ENCODE measurements at regions of chr14 and their contacts with region 1.

Region 1: DNA sequence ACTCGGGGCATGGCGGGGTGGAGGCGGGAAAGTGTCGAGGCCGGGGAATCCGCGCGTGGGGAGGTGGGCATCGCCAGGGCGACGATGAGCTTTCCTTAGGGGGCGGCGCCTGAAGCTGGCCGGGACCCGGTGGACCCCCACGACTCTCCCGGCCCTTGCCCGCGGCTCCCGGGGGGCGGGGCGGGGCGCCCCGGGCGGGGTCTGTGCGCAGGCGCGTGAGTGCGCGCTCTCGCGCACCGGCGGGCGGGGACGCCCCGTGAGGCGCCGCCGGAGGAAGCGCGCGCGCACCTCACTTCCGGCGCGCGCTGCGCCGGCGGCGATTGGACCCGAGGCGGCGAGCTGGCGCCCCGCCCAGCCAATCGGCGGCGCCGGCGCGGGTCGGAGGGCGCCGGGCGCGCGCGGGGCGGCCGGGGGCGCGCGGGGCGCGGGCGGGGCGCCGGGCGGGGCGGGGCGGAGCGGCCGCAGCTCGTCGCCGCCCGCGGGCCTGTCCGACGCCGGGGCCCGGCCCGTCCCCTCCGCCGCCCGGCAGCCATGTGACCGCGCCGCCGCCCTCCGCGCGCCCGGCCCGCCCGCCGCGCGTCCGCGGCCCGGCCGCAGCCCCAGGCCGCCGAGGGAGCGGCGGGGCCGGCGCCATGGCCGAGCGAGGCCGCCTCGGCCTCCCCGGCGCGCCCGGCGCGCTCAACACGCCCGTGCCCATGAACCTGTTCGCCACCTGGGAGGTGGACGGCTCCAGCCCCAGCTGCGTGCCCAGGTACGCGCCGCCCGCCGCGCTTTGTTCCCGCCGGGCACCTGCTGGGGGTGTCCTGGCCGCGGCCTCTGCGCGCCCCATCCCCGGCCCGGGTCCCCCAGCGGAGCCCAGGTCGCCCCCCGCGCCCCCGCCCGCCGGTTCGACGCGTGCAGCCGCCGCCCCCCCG is at the start of gene PACS2:
- DNase-seq: peak; percentile 72
- H3K4me3 Mint-ChIP-seq: peak within 1 kb of the TSS; percentile 84
- H3K27ac Mint-ChIP-seq: peak within 1 kb of the TSS; percentile 3
- H3K4me1 Mint-ChIP-seq: peaks cover 6% of the 10 kb centered on the region
- H3K27me3 Mint-ChIP-seq: no peaks in the 10 kb centered on the region
- CTCF ChIP-seq: no peak
- total RNA-seq, gene PACS2: 49.7 and 57.7 TPM in 2 replicates

Region 2: GRCh38 chr14:105300792-105301533 is 13.6 kb before region 1 on chr14 and contains the start of gene BRF1:
- CTCF ChIA-PET with region 1: no interaction called
- POLR2A ChIA-PET with region 1: interaction called, 29 read pairs
- intact Hi-C with region 1: no loop called
- DNase-seq: peak; percentile 96
- H3K4me3 Mint-ChIP-seq: peak within 1 kb of the TSS; percentile 83
- H3K27ac Mint-ChIP-seq: peak within 1 kb of the TSS; percentile 12
- H3K4me1 Mint-ChIP-seq: peaks cover 22% of the 10 kb centered on the region
- H3K27me3 Mint-ChIP-seq: no peaks in the 10 kb centered on the region
- CTCF ChIP-seq: no peak
- total RNA-seq, gene BRF1: 30.7 and 34.3 TPM in 2 replicates